ENCODE measurements at regions of chr19 and their contacts with region 1.

Region 1: GRCh38 chr19:13764101-13764807 is at the start of gene MRI1:
- DNase-seq: peak; percentile 36 to 78 (median 60)
- ATAC-seq: peak; percentile 84 to 88
- H3K4me3 Mint-ChIP-seq: peak within 1 kb of the TSS; percentile 84 to 95 (median 90)
- H3K27ac Mint-ChIP-seq: peak within 1 kb of the TSS; percentile 49 to 96 (median 90)
- H3K4me1 Mint-ChIP-seq: peaks cover 12 to 22% (median 18%) of the 10 kb centered on the region in 4 donors
- H3K27me3 Mint-ChIP-seq: no peaks in the 10 kb centered on the region
- polyA plus RNA-seq, gene MRI1: 6.4 to 15.5 (median 11.6) TPM

Region 2: DNA sequence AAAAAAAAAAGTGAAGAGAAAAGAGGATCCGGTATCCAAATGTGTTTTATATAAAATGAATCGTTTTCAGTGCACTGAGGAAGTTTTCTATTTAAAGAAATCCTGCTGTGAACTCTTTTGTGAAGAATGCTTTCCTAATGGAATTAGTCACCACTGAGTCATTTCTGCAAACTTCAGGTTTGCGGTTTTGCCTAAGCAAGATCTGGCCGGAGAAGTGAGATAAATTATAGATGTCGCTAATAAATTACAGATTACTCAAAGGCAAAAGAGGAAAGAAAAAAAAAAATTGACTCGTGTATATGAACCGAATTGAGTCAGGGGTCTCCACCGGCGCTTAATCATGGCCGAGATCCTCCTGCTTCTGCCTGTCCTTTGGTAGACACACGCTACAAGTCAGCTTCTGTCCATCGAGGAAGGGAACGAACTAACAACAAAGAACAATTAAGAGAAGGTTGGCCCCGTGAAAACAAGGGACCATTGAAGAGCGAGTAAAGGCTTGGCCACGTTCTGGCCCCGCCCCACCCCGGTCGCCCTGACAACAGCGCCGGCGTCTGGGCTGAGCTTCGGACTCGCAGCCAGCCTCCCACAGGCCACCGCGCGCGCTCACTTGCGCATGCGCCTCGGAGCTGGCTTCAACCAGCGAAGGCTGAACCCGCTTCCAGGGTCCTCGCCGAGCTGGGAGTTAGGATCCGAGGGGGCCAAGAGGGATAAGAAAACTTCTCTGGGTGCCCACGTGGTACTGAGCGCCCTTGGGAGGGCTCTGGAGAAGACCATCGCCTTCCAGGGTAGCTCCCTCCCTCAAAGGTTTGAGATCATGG is 32.9 kb before region 1 on chr19:
- POLR2A ChIA-PET with region 1: interaction called, 11 read pairs
- DNase-seq: peak; percentile 87 to 96 (median 92)
- ATAC-seq: peak; percentile 100
- H3K4me3 Mint-ChIP-seq: peak overlapping the region; percentile 83 to 96 (median 92)
- H3K27ac Mint-ChIP-seq: peak overlapping the region; percentile 83 to 96 (median 90)
- H3K4me1 Mint-ChIP-seq: peaks cover 4 to 21% (median 12%) of the 10 kb centered on the region in 4 donors
- H3K27me3 Mint-ChIP-seq: no peaks in the 10 kb centered on the region

Region 3: DNA sequence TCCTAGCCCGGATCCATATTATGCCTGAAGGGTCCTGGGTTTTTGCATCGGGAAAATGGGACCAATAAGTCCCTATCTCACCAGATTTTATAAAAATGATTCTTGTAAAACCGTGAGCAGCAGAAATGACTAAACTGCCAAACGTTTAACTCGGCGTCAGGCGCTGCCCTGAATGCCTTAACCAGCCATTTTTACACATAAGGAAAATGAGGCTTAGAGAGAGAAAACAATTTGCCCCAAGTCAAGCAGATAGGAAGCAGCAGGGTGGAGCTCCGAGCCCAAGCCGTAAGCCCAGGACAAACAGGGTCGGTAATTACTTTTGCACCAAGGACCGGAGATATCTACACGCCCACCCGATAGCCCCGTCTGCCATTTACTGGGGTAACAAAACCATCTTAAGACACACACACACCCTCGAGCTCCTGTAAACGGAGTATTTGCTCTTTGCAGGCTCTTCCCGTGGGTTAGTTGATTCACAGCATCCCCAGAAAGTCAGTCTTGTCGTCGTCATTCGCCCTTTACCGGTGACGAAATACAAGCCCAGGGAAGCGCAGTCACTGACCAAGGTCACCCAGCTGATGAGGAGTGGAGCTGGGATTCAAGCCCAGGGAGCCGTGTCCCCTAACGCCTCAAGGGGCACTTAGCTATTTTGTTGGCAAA is 16.0 kb before region 1 on chr19:
- POLR2A ChIA-PET with region 1: interaction called, 14 read pairs
- DNase-seq: peak in 1 of 10 donors; percentile 28
- ATAC-seq: peak; percentile 13 to 28
- H3K4me3 Mint-ChIP-seq: peak overlapping the region; percentile 86 to 92 (median 90)
- H3K27ac Mint-ChIP-seq: peak overlapping the region; percentile 84 to 98 (median 94)
- H3K4me1 Mint-ChIP-seq: peaks cover 10 to 44% (median 30%) of the 10 kb centered on the region in 4 donors
- H3K27me3 Mint-ChIP-seq: no peaks in the 10 kb centered on the region

Measured in naive thymus-derived CD8-positive, alpha-beta T cell (primary cell).